ENCODE measurements at regions of chr19 and their contacts with region 1.

Region 1: DNA sequence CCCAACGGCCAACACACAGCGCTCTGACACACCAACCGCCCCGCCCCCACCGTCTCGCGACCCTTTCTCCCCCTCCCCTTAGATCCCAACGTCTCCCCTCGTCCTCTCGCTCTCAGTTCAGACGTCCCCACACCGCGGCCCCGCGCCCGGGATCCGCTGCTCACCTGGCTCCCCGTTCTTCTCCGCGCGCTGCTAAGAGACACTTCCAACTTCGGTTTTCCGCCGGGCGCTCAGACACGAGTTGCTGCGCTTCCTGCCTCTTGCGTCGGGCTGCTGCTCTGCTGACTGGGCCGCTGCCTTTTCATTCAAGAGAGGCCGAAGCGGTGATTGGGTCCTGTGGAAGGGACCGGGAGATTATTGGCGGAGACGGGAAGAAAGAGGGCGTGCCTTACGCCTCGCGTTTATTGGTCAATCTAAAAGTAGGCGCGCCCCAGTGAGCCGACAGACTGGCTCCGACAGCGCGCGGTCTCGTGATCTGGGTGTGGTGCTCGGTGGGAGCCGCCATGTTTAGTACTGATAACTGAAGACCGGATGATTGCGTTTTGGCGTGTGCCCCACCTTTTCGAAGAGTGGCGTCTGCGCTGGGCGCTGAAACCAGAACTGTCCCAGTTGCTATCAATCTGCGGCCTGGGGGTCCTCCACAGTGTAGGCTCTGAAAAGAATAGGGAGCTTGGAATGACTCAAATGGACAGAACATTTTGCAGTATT is at the start of gene DDX39A:
- DNase-seq: peak; percentile 93
- ATAC-seq: peak; percentile 96
- H3K4me3 ChIP-seq: peak within 1 kb of the TSS; percentile 76 to 85
- H3K27ac ChIP-seq: peak within 1 kb of the TSS; percentile 97
- H3K4me1 ChIP-seq: peaks cover 12% of the 10 kb centered on the region
- H3K27me3 ChIP-seq: no peaks in the 10 kb centered on the region
- CTCF ChIP-seq: no peak
- total RNA-seq, gene DDX39A: 117 TPM

Region 2: DNA sequence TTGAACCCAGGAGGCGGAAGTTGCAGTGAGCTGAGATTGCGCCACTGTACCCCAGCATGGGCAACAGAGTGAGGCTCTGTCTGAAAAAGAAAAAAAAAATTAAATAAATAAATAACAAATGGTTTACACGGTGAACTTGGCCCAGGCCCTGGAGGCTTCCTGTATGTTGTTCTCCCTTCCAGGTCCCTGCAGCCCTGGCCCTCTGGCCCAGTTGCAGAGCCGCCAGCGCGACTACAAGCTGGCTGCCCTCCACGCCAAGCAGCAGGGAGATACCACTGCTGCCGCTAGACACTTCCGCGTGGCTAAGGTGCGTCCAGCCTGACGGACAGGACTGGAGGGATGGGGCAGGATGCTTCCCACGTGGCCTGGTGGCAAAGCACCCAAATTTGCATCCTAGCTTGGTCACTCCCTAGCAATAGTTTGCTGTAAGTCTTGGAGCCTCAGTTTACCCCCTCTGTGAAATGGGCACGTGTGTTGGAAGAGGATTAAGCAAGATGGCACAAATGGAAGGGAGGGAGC is 501.3 kb before region 1 on chr19:
- CTCF ChIA-PET with region 1: no interaction called
- POLR2A ChIA-PET with region 1: no interaction called
- in situ Hi-C with region 1: no loop called
- intact Hi-C with region 1: no loop called
- DNase-seq: no peak
- ATAC-seq: no peak
- H3K4me3 ChIP-seq: no peak overlapping the region
- H3K27ac ChIP-seq: no peak overlapping the region
- H3K4me1 ChIP-seq: no peaks in the 10 kb centered on the region
- H3K27me3 ChIP-seq: no peaks in the 10 kb centered on the region
- CTCF ChIP-seq: no peak

Region 3: GRCh38 chr19:14496028-14496833 is 77.0 kb after region 1 on chr19 and contains the start of gene GIPC1:
- CTCF ChIA-PET with region 1: interaction called, 15 read pairs
- POLR2A ChIA-PET with region 1: no interaction called
- in situ Hi-C with region 1: no loop called
- intact Hi-C with region 1: no loop called
- DNase-seq: peak; percentile 76
- ATAC-seq: peak; percentile 93
- H3K4me3 ChIP-seq: peak within 1 kb of the TSS; percentile 66 to 82
- H3K27ac ChIP-seq: peak within 1 kb of the TSS; percentile 92
- H3K4me1 ChIP-seq: peaks cover 18% of the 10 kb centered on the region
- H3K27me3 ChIP-seq: no peaks in the 10 kb centered on the region
- CTCF ChIP-seq: no peak
- total RNA-seq, gene GIPC1: 160 TPM

Region 4: GRCh38 chr19:14550201-14550784 is 131.0 kb after region 1 on chr19:
- CTCF ChIA-PET with region 1: no interaction called
- POLR2A ChIA-PET with region 1: interaction called, 15 read pairs
- in situ Hi-C with region 1: no loop called
- intact Hi-C with region 1: no loop called
- DNase-seq: no peak
- ATAC-seq: peak; percentile 73
- H3K4me3 ChIP-seq: peak overlapping the region in 1 of 2 experiments; percentile 16; a peak in 1 of 4 replicates
- H3K27ac ChIP-seq: peak overlapping the region; percentile 78
- H3K4me1 ChIP-seq: peaks cover 41% of the 10 kb centered on the region
- H3K27me3 ChIP-seq: no peaks in the 10 kb centered on the region
- CTCF ChIP-seq: no peak